Activated T-helper 1 cell treated with anti-CD3 and anti-CD28 coated beads, Interleukin-12 subunit alpha, Interleukin-12 subunit beta, Interleukin-2, Interleukin-4 antibody, amounts not matched to agents 30 ng/mL and 10 ng/mL and 1 ng/mL, durations not matched to agents 14 hours and 24 hours and 36 hours (primary cell): ENCODE measurements at regions of chr22 and their contacts with region 1.

Region 1: GRCh38 chr22:28800308-28801077 is at the start of gene XBP1:
- DNase-seq: peak; percentile 92
- H3K4me3 Mint-ChIP-seq: peak within 1 kb of the TSS; percentile 96
- H3K27ac Mint-ChIP-seq: peak within 1 kb of the TSS; percentile 98
- H3K4me1 Mint-ChIP-seq: peaks cover 48% of the 10 kb centered on the region
- H3K27me3 Mint-ChIP-seq: peaks cover 2% of the 10 kb centered on the region
- total RNA-seq, gene XBP1: 177 and 181 TPM in 2 replicates

Region 2: DNA sequence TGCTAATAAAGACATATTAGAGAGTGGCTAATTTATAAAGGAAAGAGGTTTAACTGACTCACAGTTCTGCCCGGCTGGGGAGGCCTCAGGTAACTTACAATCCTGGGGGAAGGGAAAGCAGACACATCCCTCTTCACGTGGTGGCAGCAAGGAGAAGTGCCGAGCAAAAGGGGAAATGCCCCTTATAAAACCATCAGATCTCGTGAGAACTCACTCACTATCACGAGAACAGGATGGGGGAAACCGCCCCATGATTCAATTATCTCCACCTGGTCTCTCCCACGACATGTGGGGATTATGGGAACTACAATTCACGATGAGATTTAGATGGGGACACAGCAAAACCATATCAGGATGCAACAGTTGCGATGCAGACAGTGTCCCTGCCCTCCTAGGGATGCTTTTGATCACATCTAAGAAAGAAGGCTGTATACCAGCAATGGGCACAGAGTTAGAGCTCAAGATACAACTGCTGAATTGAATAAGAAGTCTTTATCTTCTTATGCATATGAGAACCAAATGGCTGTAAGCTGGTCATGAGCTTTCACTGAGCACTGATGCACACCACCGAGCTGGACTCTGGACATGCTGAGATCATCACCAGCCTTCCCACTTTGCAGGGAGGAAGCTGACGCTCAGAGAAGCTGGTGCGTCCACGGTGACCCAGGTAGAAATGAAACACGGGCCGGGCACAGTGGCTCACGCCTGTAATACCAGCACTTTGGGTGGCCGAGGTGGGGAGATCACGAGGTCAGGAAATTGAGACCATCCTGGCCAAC is 1254.1 kb before region 1 on chr22:
- intact Hi-C with region 1: no loop called
- DNase-seq: no peak
- H3K4me3 Mint-ChIP-seq: no peak overlapping the region
- H3K27ac Mint-ChIP-seq: no peak overlapping the region
- H3K4me1 Mint-ChIP-seq: no peaks in the 10 kb centered on the region
- H3K27me3 Mint-ChIP-seq: no peaks in the 10 kb centered on the region

Region 3: GRCh38 chr22:27919222-27919941 is 881.1 kb before region 1 on chr22 and contains the start of gene PITPNB:
- intact Hi-C with region 1: loop called (anchors 1 kb)
- DNase-seq: peak; percentile 98
- H3K4me3 Mint-ChIP-seq: peak within 1 kb of the TSS; percentile 99
- H3K27ac Mint-ChIP-seq: peak within 1 kb of the TSS; percentile 100
- H3K4me1 Mint-ChIP-seq: peaks cover 65% of the 10 kb centered on the region
- H3K27me3 Mint-ChIP-seq: peaks cover 5% of the 10 kb centered on the region
- total RNA-seq, gene PITPNB: 153 and 154 TPM in 2 replicates

Region 4: DNA sequence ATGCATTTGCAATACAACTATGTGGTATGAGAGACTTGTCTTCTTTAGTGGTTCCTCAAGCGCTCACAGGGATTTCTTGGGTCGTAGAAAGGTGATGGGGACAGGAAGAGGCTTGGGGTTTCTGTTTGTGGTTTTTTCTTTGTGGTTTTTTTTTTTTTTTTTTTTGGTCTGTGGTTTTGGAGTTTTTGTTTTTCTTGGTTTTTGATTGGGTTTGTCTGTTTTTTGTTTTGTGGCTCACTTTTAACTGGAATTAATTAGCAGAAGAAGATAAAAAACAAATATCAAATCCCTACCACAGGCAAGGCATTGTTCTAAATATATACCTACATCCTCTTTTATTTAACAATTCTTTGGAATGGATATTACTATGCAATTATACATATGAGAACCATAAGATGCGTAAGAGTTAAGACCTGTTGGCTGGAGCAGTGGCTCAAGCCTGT is 126.4 kb before region 1 on chr22:
- intact Hi-C with region 1: loop called (anchors 5 kb)
- DNase-seq: peak; percentile 37
- H3K4me3 Mint-ChIP-seq: peak overlapping the region; percentile 73
- H3K27ac Mint-ChIP-seq: peak overlapping the region; percentile 99
- H3K4me1 Mint-ChIP-seq: peaks cover 30% of the 10 kb centered on the region
- H3K27me3 Mint-ChIP-seq: peaks cover 75% of the 10 kb centered on the region

Region 5: GRCh38 chr22:28772633-28773460 is 27.6 kb before region 1 on chr22 and contains the start of gene CCDC117:
- intact Hi-C with region 1: loop called (anchors 1 kb)
- DNase-seq: peak; percentile 90
- H3K4me3 Mint-ChIP-seq: peak within 1 kb of the TSS; percentile 100
- H3K27ac Mint-ChIP-seq: peak within 1 kb of the TSS; percentile 100
- H3K4me1 Mint-ChIP-seq: peaks cover 22% of the 10 kb centered on the region
- H3K27me3 Mint-ChIP-seq: peaks cover 4% of the 10 kb centered on the region
- total RNA-seq, gene CCDC117: 46.4 and 52.8 TPM in 2 replicates

Region 6: GRCh38 chr22:28822930-28823551 is 22.5 kb after region 1 on chr22:
- intact Hi-C with region 1: loop called (anchors 1 kb)
- DNase-seq: peak; percentile 51
- H3K4me3 Mint-ChIP-seq: peak overlapping the region; percentile 65
- H3K27ac Mint-ChIP-seq: peak overlapping the region; percentile 90
- H3K4me1 Mint-ChIP-seq: peaks cover 60% of the 10 kb centered on the region
- H3K27me3 Mint-ChIP-seq: no peaks in the 10 kb centered on the region

Region 7: GRCh38 chr22:28882878-28883656 is 82.6 kb after region 1 on chr22 and contains the start of gene ZNRF3:
- intact Hi-C with region 1: loop called (anchors 1 kb)
- DNase-seq: peak; percentile 78
- H3K4me3 Mint-ChIP-seq: peak within 1 kb of the TSS; percentile 79
- H3K27ac Mint-ChIP-seq: no peak within 1 kb of the TSS
- H3K4me1 Mint-ChIP-seq: peaks cover 14% of the 10 kb centered on the region
- H3K27me3 Mint-ChIP-seq: peaks cover 67% of the 10 kb centered on the region
- total RNA-seq, gene ZNRF3: 1.9 and 2.1 TPM in 2 replicates